H1 (cell line): ENCODE measurements at regions of chr3 and their contacts with region 1.

Region 1: DNA sequence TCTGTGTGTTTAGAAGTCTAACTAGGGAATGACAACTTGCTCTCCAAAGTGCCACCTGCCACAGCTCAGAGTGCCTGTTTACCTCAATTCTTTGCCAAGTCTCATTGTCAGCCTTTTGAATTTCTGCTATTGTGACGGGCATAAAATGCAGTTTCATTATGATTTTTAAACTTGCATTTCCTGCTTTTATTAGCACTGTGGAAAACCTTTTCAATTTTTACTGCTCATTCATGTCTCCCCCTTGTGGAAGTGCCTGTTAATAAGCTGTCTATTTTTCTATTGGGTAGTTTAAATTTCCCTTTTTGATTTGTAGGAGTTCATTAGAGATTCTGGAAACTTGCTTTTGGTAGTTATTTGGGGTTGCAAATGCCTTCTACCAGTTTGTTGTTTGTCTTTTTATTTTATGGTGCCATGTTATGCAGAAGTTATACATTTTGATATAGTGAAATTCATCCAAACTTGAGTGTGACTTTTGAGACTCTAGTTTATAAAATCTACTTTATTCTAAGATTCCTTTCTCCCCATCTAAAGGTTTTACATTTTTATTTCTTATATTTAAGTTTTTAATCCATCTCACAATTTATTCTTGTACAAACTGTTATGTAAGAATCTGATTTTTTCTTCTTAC is 53.9 kb upstream of the FRMD4B start:
- DNase-seq: no peak
- H3K4me3 ChIP-seq: no peak overlapping the region
- H3K27ac ChIP-seq: no peak overlapping the region
- H3K4me1 ChIP-seq: peaks cover 0 to 6% (median under 1%) of the 10 kb centered on the region in 4 experiments; a peak in 1 of 7 replicates
- H3K27me3 ChIP-seq: peaks cover 0 to under 1% (median 0%) of the 10 kb centered on the region in 4 experiments; a peak in 1 of 7 replicates
- CTCF ChIP-seq: peak in 1 of 3 experiments; percentile 46; a peak in 2 of 4 replicates
- EP300 ChIP-seq: no peak
- POLR2A ChIP-seq: no peak
- RAD21 ChIP-seq: peak in 1 of 2 experiments; percentile 16; a peak in 1 of 4 replicates

Region 2: GRCh38 chr3:69425261-69425660 is 14.5 kb before region 1 on chr3:
- CTCF ChIA-PET with region 1: interaction called, 43 read pairs
- POLR2A ChIA-PET with region 1: no interaction called
- DNase-seq: no peak
- H3K4me3 ChIP-seq: no peak overlapping the region
- H3K27ac ChIP-seq: no peak overlapping the region
- H3K4me1 ChIP-seq: no peaks in the 10 kb centered on the region; a peak in 1 of 7 replicates
- H3K27me3 ChIP-seq: no peaks in the 10 kb centered on the region
- CTCF ChIP-seq: peak in 2 of 3 experiments; percentile 79 to 85; a peak in 3 of 4 replicates
- EP300 ChIP-seq: no peak
- POLR2A ChIP-seq: no peak
- RAD21 ChIP-seq: peak; percentile 83 to 89

Region 3: DNA sequence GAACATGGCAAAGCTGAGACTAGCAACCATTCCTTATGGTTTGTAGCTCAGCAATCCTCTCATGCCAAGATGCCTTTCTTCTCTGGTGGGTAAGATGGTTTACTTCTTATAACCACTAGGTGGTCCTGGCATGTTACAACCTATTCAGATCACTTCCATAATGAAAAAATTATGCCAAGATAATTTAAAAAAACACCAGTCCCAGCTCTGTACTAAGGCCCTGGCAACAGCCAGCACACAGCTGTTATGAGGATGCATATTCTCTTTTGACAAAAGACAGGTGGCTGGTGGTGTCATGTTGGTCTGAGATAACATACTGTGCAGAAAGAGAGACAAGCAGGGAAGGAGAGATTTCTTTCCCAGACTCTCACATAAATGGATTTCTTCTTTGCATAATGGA is 11.8 kb after region 1 on chr3:
- CTCF ChIA-PET with region 1: interaction called, 31 read pairs
- POLR2A ChIA-PET with region 1: interaction called, 3 read pairs
- DNase-seq: no peak
- H3K4me3 ChIP-seq: no peak overlapping the region
- H3K27ac ChIP-seq: no peak overlapping the region
- H3K4me1 ChIP-seq: no peaks in the 10 kb centered on the region
- H3K27me3 ChIP-seq: no peaks in the 10 kb centered on the region
- CTCF ChIP-seq: peak in 2 of 3 experiments; percentile 15 to 36; a peak in 1 of 4 replicates
- EP300 ChIP-seq: no peak
- POLR2A ChIP-seq: no peak
- RAD21 ChIP-seq: peak; percentile 13 to 23; a peak in 2 of 4 replicates

Region 4: GRCh38 chr3:69462022-69462825 is 22.5 kb after region 1 on chr3:
- CTCF ChIA-PET with region 1: no interaction called
- POLR2A ChIA-PET with region 1: no interaction called
- DNase-seq: no peak
- H3K4me3 ChIP-seq: no peak overlapping the region
- H3K27ac ChIP-seq: no peak overlapping the region
- H3K4me1 ChIP-seq: no peaks in the 10 kb centered on the region
- H3K27me3 ChIP-seq: no peaks in the 10 kb centered on the region
- CTCF ChIP-seq: no peak
- EP300 ChIP-seq: no peak
- POLR2A ChIP-seq: no peak
- RAD21 ChIP-seq: no peak

Region 5: GRCh38 chr3:69671082-69671952 is 231.6 kb after region 1 on chr3:
- CTCF ChIA-PET with region 1: interaction called, 18 read pairs
- POLR2A ChIA-PET with region 1: no interaction called
- DNase-seq: no peak
- H3K4me3 ChIP-seq: no peak overlapping the region
- H3K27ac ChIP-seq: no peak overlapping the region
- H3K4me1 ChIP-seq: no peaks in the 10 kb centered on the region
- H3K27me3 ChIP-seq: no peaks in the 10 kb centered on the region
- CTCF ChIP-seq: peak in 2 of 3 experiments; percentile 52 to 58; a peak in 2 of 4 replicates
- EP300 ChIP-seq: no peak
- POLR2A ChIP-seq: no peak
- RAD21 ChIP-seq: peak; percentile 85 to 87